HAP-1 (cell line): ENCODE measurements at regions of chr9 and their contacts with region 1.

Region 1: GRCh38 chr9:89675058-89675742 is 70.4 kb downstream of the GADD45G start:
- DNase-seq: peak; percentile 80 to 90
- H3K4me3 ChIP-seq: no peak overlapping the region
- H3K4me1 ChIP-seq: peaks cover 47% of the 10 kb centered on the region
- H3K27me3 ChIP-seq: no peaks in the 10 kb centered on the region

Region 2: GRCh38 chr9:89604729-89605464 is 70.3 kb before region 1 on chr9 and contains the start of gene GADD45G:
- in situ Hi-C with region 1: loop called (anchors 5 kb)
- DNase-seq: peak; percentile 94 to 95
- H3K4me3 ChIP-seq: peak within 1 kb of the TSS; percentile 82
- H3K4me1 ChIP-seq: peaks cover 26% of the 10 kb centered on the region
- H3K27me3 ChIP-seq: no peaks in the 10 kb centered on the region; the same call in 1 of the 2 replicates